Activated CD4-positive, alpha-beta memory T cell treated with anti-CD3 and anti-CD28 coated beads for 36 hours (primary cell): ENCODE measurements at regions of chr5 and their contacts with region 1.

Region 1: DNA sequence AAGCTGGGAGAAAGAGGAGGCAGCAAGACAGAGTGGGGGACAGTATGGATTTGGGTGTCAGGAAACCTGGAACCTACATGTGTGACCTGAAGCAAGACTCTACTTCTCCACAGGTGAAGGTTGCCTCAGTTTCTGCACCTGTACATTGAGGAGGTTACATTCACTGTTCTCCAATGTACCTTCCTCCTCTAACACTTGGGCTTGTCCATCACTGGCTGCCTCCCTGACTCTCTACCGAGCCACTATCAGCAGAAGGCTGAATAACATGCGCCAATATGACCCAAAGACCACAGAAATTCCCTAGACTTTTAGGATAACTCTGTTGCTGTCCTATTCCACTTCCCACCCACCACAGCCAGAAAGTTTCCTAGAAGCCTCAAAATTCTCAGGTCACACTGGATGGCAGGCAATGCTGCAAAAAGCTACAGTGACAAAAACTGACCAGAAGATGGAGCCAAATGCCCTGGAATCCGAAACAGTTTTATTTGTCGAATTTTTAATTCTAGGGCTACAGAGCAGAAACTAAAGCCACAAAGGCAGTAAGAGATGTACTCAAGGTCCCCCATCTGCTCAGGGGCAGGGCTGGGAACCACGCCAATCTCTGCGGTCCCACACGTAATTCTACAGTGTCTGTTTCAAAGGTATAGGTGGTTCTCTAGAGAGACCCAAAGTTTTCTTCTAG is 64.4 kb downstream of the FAM114A2 start:
- DNase-seq: peak; percentile 35
- H3K4me3 Mint-ChIP-seq: no peak overlapping the region
- H3K27ac Mint-ChIP-seq: no peak overlapping the region
- H3K4me1 Mint-ChIP-seq: no peaks in the 10 kb centered on the region
- H3K27me3 Mint-ChIP-seq: peaks cover 3% of the 10 kb centered on the region

Region 2: GRCh38 chr5:153067869-153068268 is 906.4 kb before region 1 on chr5:
- CTCF ChIA-PET with region 1: no interaction called
- POLR2A ChIA-PET with region 1: no interaction called
- intact Hi-C with region 1: no loop called
- DNase-seq: no peak
- H3K4me3 Mint-ChIP-seq: no peak overlapping the region
- H3K27ac Mint-ChIP-seq: no peak overlapping the region
- H3K4me1 Mint-ChIP-seq: no peaks in the 10 kb centered on the region
- H3K27me3 Mint-ChIP-seq: no peaks in the 10 kb centered on the region

Region 3: GRCh38 chr5:153987306-153987705 is 13.0 kb after region 1 on chr5:
- CTCF ChIA-PET with region 1: interaction called, 15 read pairs
- POLR2A ChIA-PET with region 1: no interaction called
- intact Hi-C with region 1: no loop called
- DNase-seq: no peak
- H3K4me3 Mint-ChIP-seq: no peak overlapping the region
- H3K27ac Mint-ChIP-seq: no peak overlapping the region
- H3K4me1 Mint-ChIP-seq: no peaks in the 10 kb centered on the region
- H3K27me3 Mint-ChIP-seq: no peaks in the 10 kb centered on the region

Region 4: GRCh38 chr5:154087257-154087656 is 113.0 kb after region 1 on chr5:
- CTCF ChIA-PET with region 1: no interaction called
- POLR2A ChIA-PET with region 1: no interaction called
- intact Hi-C with region 1: no loop called
- DNase-seq: no peak
- H3K4me3 Mint-ChIP-seq: no peak overlapping the region
- H3K27ac Mint-ChIP-seq: no peak overlapping the region
- H3K4me1 Mint-ChIP-seq: no peaks in the 10 kb centered on the region
- H3K27me3 Mint-ChIP-seq: peaks cover 5% of the 10 kb centered on the region

Region 5: DNA sequence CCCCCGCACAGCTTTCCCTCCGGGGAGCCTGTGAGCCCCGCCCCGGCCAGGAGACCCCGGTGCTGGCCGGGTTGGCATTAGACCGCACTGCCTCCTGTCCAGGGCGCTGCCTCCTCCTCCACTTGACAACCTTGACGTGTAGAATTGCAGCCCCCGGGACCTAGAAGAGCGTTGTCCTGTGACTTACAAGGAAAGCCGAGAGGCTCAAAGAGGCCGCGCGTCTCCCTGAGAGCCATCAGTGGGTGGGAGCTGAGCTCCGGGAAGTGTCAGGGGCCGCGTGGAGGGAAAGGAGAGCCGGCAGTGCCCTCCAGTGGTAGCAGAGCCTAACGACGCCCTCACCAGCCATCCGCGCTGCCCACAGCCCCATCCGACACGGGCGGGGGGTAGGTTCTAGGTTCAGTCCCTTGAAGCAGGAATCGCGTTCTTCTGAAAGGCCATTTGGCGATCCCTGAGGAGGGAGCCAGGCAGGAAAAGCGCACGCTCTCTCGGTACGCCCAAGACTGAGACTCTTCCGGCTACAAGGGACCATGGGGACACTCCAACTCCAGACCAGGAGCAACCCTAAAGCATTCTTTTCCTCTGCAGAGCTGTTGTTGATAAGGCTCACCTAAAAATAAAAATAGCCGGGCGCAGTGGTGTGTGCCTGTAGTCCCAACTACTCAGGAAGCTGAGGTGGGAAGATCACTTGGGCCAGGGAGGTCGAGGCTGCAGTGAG is 431.0 kb after region 1 on chr5:
- CTCF ChIA-PET with region 1: interaction called, 34 read pairs
- POLR2A ChIA-PET with region 1: no interaction called
- intact Hi-C with region 1: loop called (anchors 1 kb)
- DNase-seq: peak; percentile 83
- H3K4me3 Mint-ChIP-seq: peak overlapping the region; percentile 20
- H3K27ac Mint-ChIP-seq: no peak overlapping the region
- H3K4me1 Mint-ChIP-seq: peaks cover 10% of the 10 kb centered on the region
- H3K27me3 Mint-ChIP-seq: no peaks in the 10 kb centered on the region